ENCODE measurements at regions of chr14 and their contacts with region 1.

Region 1: DNA sequence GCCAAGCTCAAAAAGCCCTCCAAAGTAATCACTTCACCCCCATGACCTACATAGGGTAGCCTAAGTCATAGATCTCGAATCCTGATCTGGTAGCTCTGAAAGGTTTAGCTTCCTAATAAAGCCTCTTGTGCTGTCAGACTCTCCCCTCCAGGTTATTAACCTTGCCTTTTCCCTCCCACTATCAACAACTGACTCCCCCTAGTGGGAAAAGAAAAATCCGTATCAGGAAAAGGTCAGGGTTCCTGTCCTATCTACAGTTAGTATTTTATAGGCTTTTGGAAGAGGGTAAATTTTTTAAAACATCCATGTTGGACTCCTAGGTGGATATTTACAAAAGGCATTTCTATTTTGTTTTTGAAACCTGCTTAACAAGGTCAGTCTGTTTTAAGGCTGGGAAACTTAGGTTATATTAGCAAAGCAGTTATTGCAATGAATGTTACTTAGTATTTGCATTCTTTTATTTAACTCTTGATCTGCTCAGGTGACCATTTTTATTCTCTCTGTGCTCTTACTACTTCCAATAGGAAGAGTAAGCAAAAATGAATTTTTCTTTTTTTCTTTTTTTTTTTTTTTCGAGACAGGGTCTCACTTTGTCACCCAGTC is 8.0 kb downstream of the YY1 start:
- DNase-seq: peak; percentile 73 to 82
- ATAC-seq: peak; percentile 93 to 96
- H3K4me3 ChIP-seq: no peak overlapping the region
- H3K27ac ChIP-seq: no peak overlapping the region
- H3K4me1 ChIP-seq: peaks cover 46% of the 10 kb centered on the region
- CTCF ChIP-seq: peak; percentile 69
- EP300 ChIP-seq: no peak
- POLR2A ChIP-seq: no peak
- RAD21 ChIP-seq: peak; percentile 33 to 41; a peak in 3 of 5 replicates

Region 2: GRCh38 chr14:100263144-100263543 is 16.2 kb after region 1 on chr14:
- CTCF ChIA-PET with region 1: interaction called, 21 read pairs
- POLR2A ChIA-PET with region 1: no interaction called
- DNase-seq: no peak
- ATAC-seq: no peak
- H3K4me3 ChIP-seq: no peak overlapping the region
- H3K27ac ChIP-seq: no peak overlapping the region
- H3K4me1 ChIP-seq: no peaks in the 10 kb centered on the region
- CTCF ChIP-seq: no peak
- EP300 ChIP-seq: no peak
- POLR2A ChIP-seq: no peak
- RAD21 ChIP-seq: no peak

Region 3: GRCh38 chr14:100271247-100271939 is 24.5 kb after region 1 on chr14:
- CTCF ChIA-PET with region 1: interaction called, 11 read pairs
- POLR2A ChIA-PET with region 1: no interaction called
- DNase-seq: peak in 1 of 2 experiments; percentile 39
- ATAC-seq: peak in 1 of 2 experiments; percentile 43; a peak in 1 of 6 replicates
- H3K4me3 ChIP-seq: no peak overlapping the region
- H3K27ac ChIP-seq: no peak overlapping the region
- H3K4me1 ChIP-seq: 0 out of 3 replicates have a peak, but pooled peaks cover 5% of the 10 kb centered on the region
- CTCF ChIP-seq: peak; percentile 55
- EP300 ChIP-seq: no peak
- POLR2A ChIP-seq: no peak
- RAD21 ChIP-seq: peak; percentile 32 to 34; a peak in 2 of 5 replicates